ENCODE measurements at regions of chr2 and their contacts with region 1.

Region 1: GRCh38 chr2:112726497-112727190 is 5.8 kb downstream of the NT5DC4 start:
- DNase-seq: peak; percentile 81 to 84 (median 84)
- H3K4me3 ChIP-seq: no peak overlapping the region
- H3K4me3 Mint-ChIP-seq: no peak overlapping the region
- H3K27ac ChIP-seq: no peak overlapping the region
- H3K27ac Mint-ChIP-seq: no peak overlapping the region
- H3K4me1 ChIP-seq: no peaks in the 10 kb centered on the region
- H3K4me1 Mint-ChIP-seq: peaks cover 0 to 6% (median 1%) of the 10 kb centered on the region in 4 donors
- H3K27me3 ChIP-seq: no peaks in the 10 kb centered on the region
- H3K27me3 Mint-ChIP-seq: no peaks in the 10 kb centered on the region

Region 2: GRCh38 chr2:112584134-112584890 is 142.3 kb before region 1 on chr2 and contains the start of gene CHCHD5:
- CTCF ChIA-PET with region 1: interaction called, 19 read pairs
- POLR2A ChIA-PET with region 1: interaction called, 5 read pairs
- intact Hi-C with region 1: loop called (anchors 5 kb)
- DNase-seq: peak; percentile 92 to 97 (median 96)
- H3K4me3 ChIP-seq: peak within 1 kb of the TSS; percentile 63 to 88
- H3K4me3 Mint-ChIP-seq: peak within 1 kb of the TSS; percentile 95 to 98 (median 96)
- H3K27ac ChIP-seq: peak within 1 kb of the TSS; percentile 79
- H3K27ac Mint-ChIP-seq: peak within 1 kb of the TSS; percentile 94 to 99 (median 98)
- H3K4me1 ChIP-seq: peaks cover 27% of the 10 kb centered on the region
- H3K4me1 Mint-ChIP-seq: peaks cover 19 to 54% (median 31%) of the 10 kb centered on the region in 4 donors
- H3K27me3 ChIP-seq: no peaks in the 10 kb centered on the region
- H3K27me3 Mint-ChIP-seq: no peaks in the 10 kb centered on the region
- total RNA-seq, gene CHCHD5: 23.3 to 24.9 TPM

Region 3: GRCh38 chr2:112626604-112627059 is 100.0 kb before region 1 on chr2:
- CTCF ChIA-PET with region 1: interaction called, 204 read pairs
- POLR2A ChIA-PET with region 1: interaction called, 14 read pairs
- intact Hi-C with region 1: loop called (anchors 1 kb)
- DNase-seq: peak; percentile 57 to 75 (median 63)
- H3K4me3 ChIP-seq: peak overlapping the region in 1 of 2 donors; percentile 46
- H3K4me3 Mint-ChIP-seq: peak overlapping the region; percentile 69 to 83 (median 78)
- H3K27ac ChIP-seq: peak overlapping the region; percentile 15
- H3K27ac Mint-ChIP-seq: peak overlapping the region; percentile 57 to 95 (median 85)
- H3K4me1 ChIP-seq: peaks cover 75% of the 10 kb centered on the region
- H3K4me1 Mint-ChIP-seq: peaks cover 36 to 80% (median 60%) of the 10 kb centered on the region in 4 donors
- H3K27me3 ChIP-seq: no peaks in the 10 kb centered on the region
- H3K27me3 Mint-ChIP-seq: peaks cover 0 to 3% of the 10 kb centered on the region in 2 donors

Region 4: GRCh38 chr2:112692496-112692911 is 34.1 kb before region 1 on chr2:
- CTCF ChIA-PET with region 1: interaction called, 75 read pairs
- POLR2A ChIA-PET with region 1: interaction called, 4 read pairs
- intact Hi-C with region 1: loop called (anchors 1 kb)
- DNase-seq: peak; percentile 21 to 77 (median 44)
- H3K4me3 ChIP-seq: no peak overlapping the region
- H3K4me3 Mint-ChIP-seq: peak overlapping the region in 7 of 8 donors; percentile 13 to 71 (median 43)
- H3K27ac ChIP-seq: peak overlapping the region; percentile 10
- H3K27ac Mint-ChIP-seq: peak overlapping the region; percentile 77 to 91 (median 83)
- H3K4me1 ChIP-seq: peaks cover 34% of the 10 kb centered on the region
- H3K4me1 Mint-ChIP-seq: peaks cover 22 to 32% (median 27%) of the 10 kb centered on the region in 4 donors
- H3K27me3 ChIP-seq: no peaks in the 10 kb centered on the region
- H3K27me3 Mint-ChIP-seq: no peaks in the 10 kb centered on the region

Region 5: DNA sequence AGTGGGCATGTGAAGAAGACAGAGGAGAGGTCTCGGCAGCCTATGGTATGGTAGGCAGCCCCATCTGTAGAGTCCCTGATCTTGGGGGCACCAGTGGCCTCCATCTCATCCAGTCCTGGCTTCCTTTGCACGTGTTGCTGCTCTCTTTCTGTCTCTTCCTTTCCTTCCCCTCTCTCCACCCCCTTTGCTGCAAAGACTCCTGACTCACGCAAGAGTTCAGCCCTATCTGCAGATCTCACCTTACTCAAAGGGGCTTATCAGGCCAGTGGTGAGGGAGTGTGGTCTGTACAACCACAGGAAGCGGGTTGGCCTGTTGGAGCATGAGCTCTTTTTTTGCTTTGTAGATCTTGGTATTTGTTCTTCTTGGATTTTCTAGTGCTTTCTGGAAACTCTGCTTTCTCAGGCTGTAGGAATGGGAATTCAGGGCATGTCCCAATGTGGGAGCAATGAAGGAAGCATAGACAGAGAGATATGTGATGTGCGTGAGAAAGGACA is 20.4 kb before region 1 on chr2:
- CTCF ChIA-PET with region 1: interaction called, 11 read pairs
- POLR2A ChIA-PET with region 1: no interaction called
- intact Hi-C with region 1: no loop called
- DNase-seq: peak; percentile 48 to 77 (median 61)
- H3K4me3 ChIP-seq: no peak overlapping the region
- H3K4me3 Mint-ChIP-seq: peak overlapping the region in 6 of 8 donors; percentile 18 to 71 (median 68)
- H3K27ac ChIP-seq: no peak overlapping the region
- H3K27ac Mint-ChIP-seq: peak overlapping the region in 3 of 7 donors; percentile 5 to 53 (median 8)
- H3K4me1 ChIP-seq: peaks cover 40% of the 10 kb centered on the region
- H3K4me1 Mint-ChIP-seq: peaks cover 17 to 45% (median 31%) of the 10 kb centered on the region in 4 donors
- H3K27me3 ChIP-seq: no peaks in the 10 kb centered on the region
- H3K27me3 Mint-ChIP-seq: peaks cover 0 to 4% of the 10 kb centered on the region in 2 donors

Region 6: GRCh38 chr2:112749755-112750559 is 23.3 kb after region 1 on chr2:
- CTCF ChIA-PET with region 1: interaction called, 15 read pairs
- POLR2A ChIA-PET with region 1: no interaction called
- intact Hi-C with region 1: no loop called
- DNase-seq: peak; percentile 74 to 79 (median 77)
- H3K4me3 ChIP-seq: peak overlapping the region in 1 of 2 donors; percentile 23
- H3K4me3 Mint-ChIP-seq: peak overlapping the region; percentile 53 to 84 (median 68)
- H3K27ac ChIP-seq: peak overlapping the region; percentile 22
- H3K27ac Mint-ChIP-seq: peak overlapping the region; percentile 32 to 89 (median 82)
- H3K4me1 ChIP-seq: peaks cover 9% of the 10 kb centered on the region
- H3K4me1 Mint-ChIP-seq: peaks cover 8 to 32% (median 17%) of the 10 kb centered on the region in 4 donors
- H3K27me3 ChIP-seq: no peaks in the 10 kb centered on the region
- H3K27me3 Mint-ChIP-seq: no peaks in the 10 kb centered on the region

Region 7: GRCh38 chr2:112784199-112785189 is 57.9 kb after region 1 on chr2 and contains the start of gene IL1A:
- CTCF ChIA-PET with region 1: no interaction called
- POLR2A ChIA-PET with region 1: no interaction called
- intact Hi-C with region 1: no loop called
- DNase-seq: no peak
- H3K4me3 ChIP-seq: no peak within 1 kb of the TSS
- H3K4me3 Mint-ChIP-seq: peak within 1 kb of the TSS in 1 of 8 donors; percentile 7
- H3K27ac ChIP-seq: no peak within 1 kb of the TSS
- H3K27ac Mint-ChIP-seq: no peak within 1 kb of the TSS
- H3K4me1 ChIP-seq: no peaks in the 10 kb centered on the region
- H3K4me1 Mint-ChIP-seq: peaks cover 0 to 3% (median 0%) of the 10 kb centered on the region in 4 donors
- H3K27me3 ChIP-seq: no peaks in the 10 kb centered on the region
- H3K27me3 Mint-ChIP-seq: peaks cover 3 to 9% of the 10 kb centered on the region in 2 donors
- total RNA-seq, gene IL1A: 0.15 TPM in 1 of 2 experiments, not detected in the other

Measured in CD4-positive, alpha-beta memory T cell (primary cell).